ENCODE measurements at regions of chr6 and their contacts with region 1.

Region 1: DNA sequence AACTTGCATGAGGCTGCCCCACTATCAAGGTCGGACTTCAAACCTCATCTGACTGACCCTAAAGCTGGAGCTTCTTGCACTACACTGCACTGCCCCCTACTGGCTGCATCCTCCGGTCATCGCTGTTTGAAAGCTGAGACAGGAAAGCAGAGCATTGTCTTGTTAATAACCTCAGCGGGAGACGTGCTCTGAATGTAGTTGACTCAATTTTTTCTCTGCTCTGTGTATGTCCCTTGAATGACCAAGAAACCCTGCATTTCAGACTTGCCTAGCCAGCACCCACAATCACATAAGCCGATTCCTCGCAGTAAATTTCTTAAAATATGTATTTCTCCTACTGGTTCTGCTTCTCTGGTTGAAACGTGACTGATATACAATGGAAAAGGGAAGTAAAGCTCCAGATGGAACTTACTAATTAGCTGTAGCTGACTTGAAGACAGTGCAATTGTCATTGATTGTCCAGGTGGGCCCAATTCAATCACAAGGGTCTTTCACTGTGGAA is 27.8 kb downstream of the TCF21 start:
- DNase-seq: peak; percentile 60 to 72
- ATAC-seq: peak; percentile 78 to 81
- H3K4me3 ChIP-seq: no peak overlapping the region
- H3K27ac ChIP-seq: no peak overlapping the region
- H3K4me1 ChIP-seq: no peaks in the 10 kb centered on the region
- H3K27me3 ChIP-seq: no peaks in the 10 kb centered on the region
- CTCF ChIP-seq: peak; percentile 65 to 88 (median 79)
- POLR2A ChIP-seq: no peak

Region 2: GRCh38 chr6:132530293-132530974 is 1386.3 kb before region 1 on chr6:
- in situ Hi-C with region 1: no loop called
- intact Hi-C with region 1: loop called (anchors 5 kb)
- DNase-seq: peak; percentile 14 to 24
- ATAC-seq: peak; percentile 54 to 82
- H3K4me3 ChIP-seq: no peak overlapping the region
- H3K27ac ChIP-seq: no peak overlapping the region
- H3K4me1 ChIP-seq: no peaks in the 10 kb centered on the region
- H3K27me3 ChIP-seq: no peaks in the 10 kb centered on the region
- CTCF ChIP-seq: peak; percentile 55 to 86 (median 68)
- POLR2A ChIP-seq: no peak

Region 3: DNA sequence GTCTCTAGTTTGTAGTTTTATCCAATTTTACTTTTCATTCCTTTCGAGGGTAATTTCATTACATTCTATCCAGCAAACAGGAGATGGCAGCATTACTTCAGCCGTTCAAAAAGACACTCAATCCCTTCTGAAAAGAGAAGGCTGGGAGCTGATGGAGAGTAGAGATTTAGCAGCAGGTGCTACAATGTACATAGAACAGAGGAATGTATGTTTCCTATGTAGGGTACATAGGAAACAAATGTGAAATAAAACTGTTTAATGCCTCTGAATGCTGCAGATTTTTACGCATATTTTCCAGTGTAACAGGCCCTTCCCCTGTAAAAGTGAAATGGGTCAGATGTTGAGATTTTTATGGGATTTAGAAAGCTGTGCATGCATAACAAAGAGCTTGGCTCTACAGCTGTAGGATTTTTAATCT is 1086.4 kb before region 1 on chr6:
- in situ Hi-C with region 1: loop called in 1 of 4 experiments (anchors 25 kb)
- intact Hi-C with region 1: no loop called
- DNase-seq: no peak
- ATAC-seq: peak in 1 of 2 donors; percentile 80
- H3K4me3 ChIP-seq: no peak overlapping the region
- H3K27ac ChIP-seq: no peak overlapping the region
- H3K4me1 ChIP-seq: no peaks in the 10 kb centered on the region
- H3K27me3 ChIP-seq: no peaks in the 10 kb centered on the region
- CTCF ChIP-seq: peak in 1 of 5 experiments; percentile 34
- POLR2A ChIP-seq: no peak

Region 4: GRCh38 chr6:133424359-133424758 is 492.3 kb before region 1 on chr6:
- in situ Hi-C with region 1: no loop called
- intact Hi-C with region 1: no loop called
- DNase-seq: no peak
- ATAC-seq: no peak
- H3K4me3 ChIP-seq: no peak overlapping the region
- H3K27ac ChIP-seq: no peak overlapping the region
- H3K4me1 ChIP-seq: peaks cover 20% of the 10 kb centered on the region in 2 donors
- H3K27me3 ChIP-seq: no peaks in the 10 kb centered on the region
- CTCF ChIP-seq: no peak
- POLR2A ChIP-seq: no peak

Region 5: DNA sequence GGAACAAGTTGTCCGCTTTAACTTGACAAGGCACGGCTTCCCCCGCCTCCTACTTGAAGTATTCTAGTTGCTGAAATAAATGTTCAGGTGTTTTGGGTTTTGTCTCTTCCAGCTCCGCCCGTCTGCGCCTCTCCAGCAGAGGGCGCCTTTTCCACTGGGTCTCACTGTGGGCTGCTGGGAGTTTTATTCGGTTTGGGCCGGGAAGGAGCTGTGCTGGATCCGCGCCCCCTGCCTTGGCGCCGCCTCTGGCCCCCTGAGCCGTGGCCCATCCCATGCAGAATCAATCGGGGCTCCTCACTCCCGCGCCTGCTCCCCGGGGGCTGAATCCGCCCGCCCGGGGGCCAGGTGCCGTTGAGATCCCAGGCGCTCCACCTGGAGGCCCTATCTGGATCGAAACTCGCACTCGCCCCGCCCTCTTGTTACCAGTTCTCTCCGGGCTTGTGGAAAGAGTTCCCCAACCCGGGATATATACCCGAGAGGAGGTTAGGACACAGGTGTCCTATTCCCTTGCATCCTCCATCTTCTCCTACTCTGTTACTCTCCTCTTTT is 78.8 kb before region 1 on chr6:
- in situ Hi-C with region 1: no loop called
- intact Hi-C with region 1: loop called (anchors 5 kb)
- DNase-seq: no peak
- ATAC-seq: no peak
- H3K4me3 ChIP-seq: peak overlapping the region; percentile 45 to 64 (median 53)
- H3K27ac ChIP-seq: no peak overlapping the region
- H3K4me1 ChIP-seq: no peaks in the 10 kb centered on the region
- H3K27me3 ChIP-seq: no peaks in the 10 kb centered on the region
- CTCF ChIP-seq: peak; percentile 21 to 62 (median 53)
- POLR2A ChIP-seq: no peak

Region 6: GRCh38 chr6:134111062-134111677 is 194.5 kb after region 1 on chr6:
- in situ Hi-C with region 1: no loop called
- intact Hi-C with region 1: no loop called
- DNase-seq: no peak
- ATAC-seq: peak in 1 of 2 donors; percentile 62
- H3K4me3 ChIP-seq: no peak overlapping the region
- H3K27ac ChIP-seq: no peak overlapping the region
- H3K4me1 ChIP-seq: no peaks in the 10 kb centered on the region
- H3K27me3 ChIP-seq: no peaks in the 10 kb centered on the region
- CTCF ChIP-seq: peak in 4 of 5 experiments; percentile 41 to 70 (median 55)
- POLR2A ChIP-seq: no peak